ENCODE measurements at regions of chr3 and their contacts with region 1.

Region 1: GRCh38 chr3:127800508-127800907 is 21.8 kb downstream of the MGLL start:
- DNase-seq: peak; percentile 74
- H3K4me3 Mint-ChIP-seq: peak overlapping the region; percentile 41
- H3K27ac Mint-ChIP-seq: peak overlapping the region; percentile 85
- H3K4me1 Mint-ChIP-seq: peaks cover 10% of the 10 kb centered on the region
- H3K27me3 Mint-ChIP-seq: no peaks in the 10 kb centered on the region

Region 2: GRCh38 chr3:126494204-126494969 is 1306.1 kb before region 1 on chr3:
- intact Hi-C with region 1: no loop called
- DNase-seq: no peak
- H3K4me3 Mint-ChIP-seq: no peak overlapping the region
- H3K27ac Mint-ChIP-seq: no peak overlapping the region
- H3K4me1 Mint-ChIP-seq: peaks cover 9% of the 10 kb centered on the region
- H3K27me3 Mint-ChIP-seq: no peaks in the 10 kb centered on the region

Region 3: GRCh38 chr3:127735767-127736704 is 64.5 kb before region 1 on chr3:
- intact Hi-C with region 1: no loop called
- DNase-seq: no peak
- H3K4me3 Mint-ChIP-seq: no peak overlapping the region
- H3K27ac Mint-ChIP-seq: no peak overlapping the region
- H3K4me1 Mint-ChIP-seq: peaks cover 8% of the 10 kb centered on the region
- H3K27me3 Mint-ChIP-seq: peaks cover 17% of the 10 kb centered on the region

Region 4: GRCh38 chr3:127750226-127751031 is 50.1 kb before region 1 on chr3:
- intact Hi-C with region 1: loop called (anchors 10 kb)
- DNase-seq: no peak
- H3K4me3 Mint-ChIP-seq: no peak overlapping the region
- H3K27ac Mint-ChIP-seq: peak overlapping the region; percentile 67
- H3K4me1 Mint-ChIP-seq: peaks cover 30% of the 10 kb centered on the region
- H3K27me3 Mint-ChIP-seq: peaks cover 18% of the 10 kb centered on the region

Measured in activated CD4-positive, alpha-beta T cell treated with anti-CD3 and anti-CD28 coated beads, Interleukin-2, amount 10 ng/mL, durations not matched to agents 24 days and 14 days (primary cell).